Activated CD8-positive, alpha-beta T cell treated with anti-CD3 and anti-CD28 coated beads for 36 hours (primary cell): ENCODE measurements at regions of chr12 and their contacts with region 1.

Region 1: DNA sequence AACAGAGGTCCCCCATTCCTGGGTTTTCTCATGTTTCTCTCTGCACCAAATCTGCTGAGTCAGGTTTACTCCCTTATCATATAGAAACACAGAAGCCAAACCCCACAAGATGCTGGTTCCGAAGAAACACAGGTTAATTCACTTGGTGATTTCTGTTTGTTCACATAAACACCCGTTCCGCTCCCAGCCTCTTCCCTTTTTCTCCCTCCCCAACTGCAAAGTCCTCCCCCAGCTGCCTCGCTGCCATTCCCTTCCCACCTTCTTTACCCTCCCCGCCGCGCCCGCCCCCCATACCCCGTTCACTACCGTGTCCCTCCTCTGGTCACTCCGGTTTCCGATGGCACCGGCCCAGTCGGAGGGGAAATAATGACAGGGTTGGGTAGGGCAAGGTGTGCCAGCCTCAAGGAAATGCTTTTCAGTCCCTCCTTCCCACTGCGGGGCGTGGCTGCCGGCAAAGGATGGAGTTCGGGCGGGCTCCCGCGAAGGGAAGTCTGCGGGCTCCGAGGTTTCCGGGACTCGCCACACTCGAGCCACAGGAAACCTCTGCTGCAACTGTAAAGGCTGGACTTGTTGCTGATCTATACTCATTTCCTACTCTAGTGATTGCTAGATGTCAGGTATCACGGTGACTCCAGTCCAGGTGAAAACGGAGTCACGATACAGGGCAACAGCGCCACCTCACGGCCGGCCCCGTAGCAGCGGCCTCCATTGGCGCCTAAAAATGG is at the start of gene STYK1:
- DNase-seq: peak; percentile 84
- ATAC-seq: peak; percentile 81
- H3K4me3 Mint-ChIP-seq: peak within 1 kb of the TSS; percentile 71
- H3K27ac Mint-ChIP-seq: peak within 1 kb of the TSS; percentile 76
- H3K4me1 Mint-ChIP-seq: peaks cover 39% of the 10 kb centered on the region
- H3K27me3 Mint-ChIP-seq: peaks cover 20% of the 10 kb centered on the region
- CTCF ChIP-seq: peak; percentile 99
- total RNA-seq, gene STYK1: 0.70 to 1.1 TPM

Region 2: DNA sequence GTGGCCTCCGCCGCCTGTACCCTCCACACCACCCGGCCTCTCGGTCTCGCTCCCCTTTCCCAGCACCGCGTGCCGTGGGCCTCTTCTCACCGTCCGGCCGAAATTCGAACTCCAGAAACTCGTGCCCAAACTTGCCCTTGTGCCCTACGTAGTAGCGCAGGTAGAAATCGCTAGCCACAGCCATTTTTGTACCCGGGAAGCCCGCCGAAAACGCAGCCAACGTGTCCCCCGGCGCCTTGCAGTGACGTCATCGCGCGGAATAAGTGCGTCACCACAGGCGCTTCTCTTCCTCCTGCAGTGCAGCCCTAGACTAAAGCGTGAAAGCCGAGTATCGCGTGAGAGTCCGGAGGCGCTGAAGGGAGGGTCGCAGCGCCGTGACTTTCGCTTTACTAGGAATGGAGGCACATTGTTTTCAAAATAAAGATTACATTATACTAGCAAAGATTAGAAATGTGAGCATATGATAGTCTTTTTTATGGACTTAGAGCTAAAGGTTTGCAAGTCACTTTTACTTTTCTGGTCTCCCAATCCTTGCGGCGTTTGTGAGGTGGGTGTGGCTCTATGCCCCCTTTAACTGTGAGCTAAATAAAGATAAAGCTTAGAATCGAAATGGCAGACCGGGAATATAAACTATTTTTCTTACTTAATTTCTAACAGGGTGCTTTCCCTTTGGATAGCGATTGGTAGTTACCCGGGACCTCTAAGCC is 60.3 kb before region 1 on chr12 and contains the start of gene MAGOHB:
- CTCF ChIA-PET with region 1: interaction called, 4 read pairs
- POLR2A ChIA-PET with region 1: no interaction called
- intact Hi-C with region 1: loop called (anchors 2 kb)
- DNase-seq: peak; percentile 99
- ATAC-seq: peak; percentile 97
- H3K4me3 Mint-ChIP-seq: peak within 1 kb of the TSS; percentile 100
- H3K27ac Mint-ChIP-seq: peak within 1 kb of the TSS; percentile 100
- H3K4me1 Mint-ChIP-seq: peaks cover 30% of the 10 kb centered on the region
- H3K27me3 Mint-ChIP-seq: peaks cover 2% of the 10 kb centered on the region
- CTCF ChIP-seq: no peak
- total RNA-seq, gene MAGOHB: 80.4 to 85.6 TPM

Region 3: DNA sequence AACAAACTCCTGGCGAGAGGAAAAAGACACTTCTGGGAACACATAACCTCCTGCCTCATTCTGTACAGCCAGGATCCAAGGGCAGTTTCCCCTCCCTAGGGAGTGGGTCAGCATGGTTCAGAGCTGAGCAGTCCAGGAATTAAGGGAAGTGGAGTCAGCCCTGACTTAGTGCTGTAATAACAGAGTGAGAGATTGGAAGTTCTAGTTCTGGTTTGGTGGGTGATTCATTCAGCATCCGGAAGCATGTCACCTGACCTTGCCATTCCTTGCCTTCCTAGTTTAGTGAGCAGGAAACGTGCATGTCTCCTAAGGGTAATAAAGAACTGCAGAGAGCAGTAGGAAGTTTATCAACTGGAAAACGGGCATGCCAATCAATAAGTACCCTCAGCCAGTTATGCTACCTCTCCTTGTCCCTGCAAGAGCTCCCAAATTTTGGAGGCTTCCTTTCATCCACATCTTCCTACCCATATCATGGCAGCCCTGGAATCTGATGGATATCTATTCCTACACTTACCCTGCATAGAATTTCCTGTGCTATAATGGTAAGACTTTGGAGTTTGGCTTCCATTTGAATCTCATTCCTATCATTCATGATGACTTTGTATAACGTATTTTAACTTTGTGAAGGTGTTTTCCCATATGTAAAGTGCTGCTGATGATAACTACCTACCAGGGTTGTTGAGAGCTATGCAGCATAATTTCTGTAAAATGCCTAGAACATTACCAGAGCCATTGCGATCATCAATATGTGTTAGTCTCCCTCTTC is 31.9 kb before region 1 on chr12:
- CTCF ChIA-PET with region 1: no interaction called
- POLR2A ChIA-PET with region 1: no interaction called
- intact Hi-C with region 1: no loop called
- DNase-seq: no peak
- ATAC-seq: no peak
- H3K4me3 Mint-ChIP-seq: no peak overlapping the region
- H3K27ac Mint-ChIP-seq: no peak overlapping the region
- H3K4me1 Mint-ChIP-seq: no peaks in the 10 kb centered on the region
- H3K27me3 Mint-ChIP-seq: no peaks in the 10 kb centered on the region
- CTCF ChIP-seq: no peak